A673 (cell line): ENCODE measurements at regions of chr4 and their contacts with region 1.

Region 1: DNA sequence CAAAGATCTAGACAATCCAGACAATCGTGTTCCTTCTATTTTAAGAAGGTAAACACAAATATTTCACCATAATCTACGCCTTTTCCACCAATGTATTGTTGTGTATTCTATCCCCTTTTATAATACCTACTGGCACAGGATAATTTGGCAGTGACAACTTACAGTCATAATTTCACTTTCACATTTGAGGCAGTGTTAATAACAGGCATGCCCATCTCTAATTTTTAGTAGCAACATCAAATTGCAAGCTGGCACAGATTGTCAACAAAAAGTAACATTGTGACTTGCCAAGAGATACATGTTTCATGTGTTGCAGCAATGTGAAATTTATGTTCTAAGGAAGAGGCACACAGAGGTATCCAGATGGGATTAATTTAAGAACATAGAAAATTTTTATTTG is 912.5 kb upstream of the PABPC4L start:
- DNase-seq: no peak
- H3K4me3 ChIP-seq: no peak overlapping the region
- H3K27ac ChIP-seq: no peak overlapping the region
- H3K4me1 ChIP-seq: no peaks in the 10 kb centered on the region
- H3K27me3 ChIP-seq: no peaks in the 10 kb centered on the region
- CTCF ChIP-seq: no peak

Region 2: DNA sequence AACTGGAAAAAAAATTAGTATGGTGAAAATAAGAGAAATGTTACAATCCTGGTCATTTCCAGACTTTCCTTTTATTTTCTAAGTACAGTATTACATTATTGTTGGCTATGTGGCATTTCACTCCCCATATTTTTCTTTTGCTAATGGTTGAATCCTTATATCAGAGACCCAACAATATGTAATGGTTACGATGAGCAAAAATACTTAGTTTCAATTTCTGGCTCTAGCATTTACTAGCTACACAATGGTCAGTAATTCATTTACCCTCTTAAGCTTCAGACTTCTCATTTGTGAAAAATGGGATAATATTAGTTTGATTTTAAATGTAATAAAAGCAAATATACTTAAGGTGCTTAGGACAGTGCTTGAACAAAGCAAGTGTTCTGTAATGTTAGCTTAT is 30.4 kb after region 1 on chr4:
- CTCF ChIA-PET with region 1: no interaction called
- POLR2A ChIA-PET with region 1: interaction called, 11 read pairs
- intact Hi-C with region 1: no loop called
- DNase-seq: no peak
- H3K4me3 ChIP-seq: no peak overlapping the region
- H3K27ac ChIP-seq: no peak overlapping the region
- H3K4me1 ChIP-seq: no peaks in the 10 kb centered on the region
- H3K27me3 ChIP-seq: no peaks in the 10 kb centered on the region
- CTCF ChIP-seq: no peak